Head of caudate nucleus (tissue), 42 donors: ENCODE measurements at regions of chr6 and their contacts with region 1.

Region 1: GRCh38 chr6:96975852-96976251 is 51.3 kb downstream of the KLHL32 start:
- DNase-seq: peak in 17 of 42 donors; percentile 13 to 72 (median 41)

Region 2: GRCh38 chr6:96675597-96675996 is 300.3 kb before region 1 on chr6:
- intact Hi-C with region 1: no loop called
- DNase-seq: peak in 1 of 42 donors; percentile 3

Region 3: GRCh38 chr6:96923871-96924493 is 51.9 kb before region 1 on chr6:
- intact Hi-C with region 1: loop called (anchors 10 kb)
- DNase-seq: peak in 1 of 42 donors; percentile 31

Region 4: GRCh38 chr6:97361286-97361685 is 385.4 kb after region 1 on chr6:
- intact Hi-C with region 1: no loop called
- DNase-seq: no peak